B cell (primary cell): ENCODE measurements at regions of chr1 and their contacts with region 1.

Region 1: GRCh38 chr1:229661022-229661877 is 35.2 kb downstream of the URB2 start:
- DNase-seq: peak; percentile 82
- ATAC-seq: peak; percentile 92
- H3K4me3 ChIP-seq: no peak overlapping the region
- H3K4me3 Mint-ChIP-seq: no peak overlapping the region
- H3K27ac ChIP-seq: no peak overlapping the region
- H3K27ac Mint-ChIP-seq: peak overlapping the region; percentile 34
- H3K4me1 ChIP-seq: peaks cover 19 to 22% of the 10 kb centered on the region in 2 donors
- H3K4me1 Mint-ChIP-seq: peaks cover 7% of the 10 kb centered on the region
- H3K27me3 ChIP-seq: no peaks in the 10 kb centered on the region
- H3K27me3 Mint-ChIP-seq: no peaks in the 10 kb centered on the region
- CTCF ChIP-seq: peak; percentile 92

Region 2: GRCh38 chr1:229024528-229025130 is 636.6 kb before region 1 on chr1:
- CTCF ChIA-PET with region 1: no interaction called
- POLR2A ChIA-PET with region 1: no interaction called
- intact Hi-C with region 1: no loop called
- DNase-seq: no peak
- ATAC-seq: no peak
- H3K4me3 ChIP-seq: no peak overlapping the region
- H3K4me3 Mint-ChIP-seq: no peak overlapping the region
- H3K27ac ChIP-seq: no peak overlapping the region
- H3K27ac Mint-ChIP-seq: no peak overlapping the region
- H3K4me1 ChIP-seq: peaks cover 7 to 11% of the 10 kb centered on the region in 2 donors
- H3K4me1 Mint-ChIP-seq: peaks cover 10% of the 10 kb centered on the region
- H3K27me3 ChIP-seq: peaks cover 0 to 5% (median 1%) of the 10 kb centered on the region in 4 experiments
- H3K27me3 Mint-ChIP-seq: peaks cover 12% of the 10 kb centered on the region
- CTCF ChIP-seq: no peak

Region 3: GRCh38 chr1:229674042-229674441 is 12.8 kb after region 1 on chr1:
- CTCF ChIA-PET with region 1: interaction called, 12 read pairs
- POLR2A ChIA-PET with region 1: no interaction called
- intact Hi-C with region 1: no loop called
- DNase-seq: no peak
- ATAC-seq: no peak
- H3K4me3 ChIP-seq: no peak overlapping the region
- H3K4me3 Mint-ChIP-seq: no peak overlapping the region
- H3K27ac ChIP-seq: no peak overlapping the region
- H3K27ac Mint-ChIP-seq: no peak overlapping the region
- H3K4me1 ChIP-seq: no peaks in the 10 kb centered on the region
- H3K4me1 Mint-ChIP-seq: no peaks in the 10 kb centered on the region
- H3K27me3 ChIP-seq: no peaks in the 10 kb centered on the region
- H3K27me3 Mint-ChIP-seq: no peaks in the 10 kb centered on the region
- CTCF ChIP-seq: no peak

Region 4: DNA sequence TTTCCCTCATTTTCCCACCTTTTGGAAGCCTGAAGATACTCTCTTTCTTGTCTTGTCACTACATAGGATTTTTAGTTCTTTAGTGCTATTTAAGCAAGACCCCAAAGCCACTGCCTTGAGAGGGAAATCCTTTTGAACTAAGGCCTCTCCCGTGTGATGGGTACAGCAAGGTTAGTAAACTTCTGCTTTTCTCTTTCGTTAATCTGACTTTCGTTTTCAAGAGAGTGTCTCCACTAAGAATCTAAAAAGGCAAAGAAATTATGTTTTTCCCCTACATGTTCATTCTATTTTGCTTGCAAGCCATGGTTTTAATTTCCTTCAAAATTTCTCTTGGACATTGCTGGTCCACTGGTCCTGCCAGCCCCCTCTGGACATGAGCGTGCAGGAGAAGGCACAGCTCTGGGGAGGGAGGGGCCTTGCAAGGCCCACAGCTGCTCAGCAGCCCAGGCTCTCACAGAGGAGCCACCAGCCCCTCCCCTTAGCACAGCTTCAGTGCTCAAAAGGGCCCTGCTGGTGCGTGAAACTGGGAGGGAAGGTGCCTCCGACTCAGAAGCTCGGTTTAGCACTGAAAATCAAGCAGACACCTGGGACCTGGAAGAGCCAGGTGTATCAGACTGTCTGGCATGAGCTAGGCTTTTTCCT is 194.9 kb after region 1 on chr1:
- CTCF ChIA-PET with region 1: no interaction called
- POLR2A ChIA-PET with region 1: no interaction called
- intact Hi-C with region 1: loop called (anchors 5 kb)
- DNase-seq: peak; percentile 82
- ATAC-seq: peak; percentile 99
- H3K4me3 ChIP-seq: peak overlapping the region; percentile 19 to 67 (median 46)
- H3K4me3 Mint-ChIP-seq: peak overlapping the region; percentile 96
- H3K27ac ChIP-seq: peak overlapping the region; percentile 85 to 90
- H3K27ac Mint-ChIP-seq: peak overlapping the region; percentile 97
- H3K4me1 ChIP-seq: peaks cover 34 to 35% of the 10 kb centered on the region in 2 donors
- H3K4me1 Mint-ChIP-seq: peaks cover 29% of the 10 kb centered on the region
- H3K27me3 ChIP-seq: no peaks in the 10 kb centered on the region
- H3K27me3 Mint-ChIP-seq: no peaks in the 10 kb centered on the region
- CTCF ChIP-seq: no peak

Region 5: DNA sequence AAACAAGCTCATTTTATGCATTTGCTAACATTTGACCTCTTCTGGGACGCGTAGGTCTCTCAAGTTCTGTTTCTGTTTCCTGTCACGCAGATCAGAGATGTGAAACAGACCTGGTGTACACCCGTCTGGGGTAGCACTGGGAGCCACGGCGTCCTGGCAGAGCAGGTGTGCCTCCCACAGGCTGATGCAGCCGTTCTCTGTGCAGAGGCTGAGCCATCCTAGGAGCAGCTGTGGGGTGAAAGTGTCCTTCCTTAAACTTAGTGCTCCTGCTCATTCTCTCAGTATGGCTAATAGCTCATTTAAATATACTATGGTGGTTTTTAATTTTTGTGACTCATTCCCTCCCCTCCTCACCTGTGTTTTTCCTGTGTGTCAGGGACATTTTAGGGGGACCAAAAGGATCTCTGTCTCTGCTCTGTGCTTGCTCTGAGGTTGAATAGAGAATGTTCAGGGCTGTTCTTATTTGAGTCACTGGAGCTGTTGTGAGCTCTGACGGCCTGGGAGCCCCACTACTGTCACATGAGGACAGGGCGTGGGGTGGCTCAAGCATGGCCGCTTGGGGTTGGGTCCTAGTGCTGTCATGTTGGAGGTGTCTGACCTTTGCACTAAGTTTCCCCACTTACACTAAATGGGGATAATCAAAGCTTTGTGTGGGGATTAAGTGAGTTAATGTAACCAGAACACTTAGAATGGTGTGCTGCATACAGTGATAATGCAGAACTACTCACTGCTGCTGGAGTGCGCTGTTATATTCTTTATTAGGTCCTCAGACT is 448.8 kb after region 1 on chr1:
- CTCF ChIA-PET with region 1: interaction called, 13 read pairs
- POLR2A ChIA-PET with region 1: interaction called, 3 read pairs
- intact Hi-C with region 1: loop called (anchors 2 kb)
- DNase-seq: peak; percentile 67
- ATAC-seq: peak; percentile 89
- H3K4me3 ChIP-seq: no peak overlapping the region
- H3K4me3 Mint-ChIP-seq: peak overlapping the region; percentile 74
- H3K27ac ChIP-seq: peak overlapping the region in 1 of 2 donors; percentile 23
- H3K27ac Mint-ChIP-seq: peak overlapping the region; percentile 90
- H3K4me1 ChIP-seq: peaks cover 37 to 53% of the 10 kb centered on the region in 2 donors
- H3K4me1 Mint-ChIP-seq: peaks cover 86% of the 10 kb centered on the region
- H3K27me3 ChIP-seq: no peaks in the 10 kb centered on the region
- H3K27me3 Mint-ChIP-seq: no peaks in the 10 kb centered on the region
- CTCF ChIP-seq: no peak

Region 6: DNA sequence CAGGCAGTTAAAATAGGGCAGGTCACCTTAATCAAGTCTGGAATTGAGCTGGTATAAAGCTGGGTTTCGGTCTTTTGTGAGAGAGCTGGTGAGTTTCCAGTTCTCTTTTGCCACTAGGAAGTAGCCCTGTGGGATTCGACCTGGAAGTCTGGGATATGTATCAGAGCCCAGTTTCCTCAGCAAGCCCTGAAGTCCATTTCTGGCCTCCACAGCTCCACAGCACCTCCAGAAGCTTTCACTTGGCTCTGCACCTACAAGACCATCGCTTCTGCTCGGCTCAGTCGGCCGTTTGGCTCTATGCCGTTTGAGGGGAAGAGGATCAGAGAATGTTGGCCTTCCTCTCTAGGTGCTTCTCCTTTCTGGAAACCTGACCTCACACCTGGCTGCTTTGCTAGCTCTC is 553.8 kb after region 1 on chr1:
- CTCF ChIA-PET with region 1: interaction called, 11 read pairs
- POLR2A ChIA-PET with region 1: interaction called, 3 read pairs
- intact Hi-C with region 1: no loop called
- DNase-seq: peak; percentile 50
- ATAC-seq: no peak
- H3K4me3 ChIP-seq: no peak overlapping the region
- H3K4me3 Mint-ChIP-seq: peak overlapping the region; percentile 44
- H3K27ac ChIP-seq: peak overlapping the region; percentile 21 to 75
- H3K27ac Mint-ChIP-seq: peak overlapping the region; percentile 63
- H3K4me1 ChIP-seq: peaks cover 75 to 77% of the 10 kb centered on the region in 2 donors
- H3K4me1 Mint-ChIP-seq: peaks cover 89% of the 10 kb centered on the region
- H3K27me3 ChIP-seq: no peaks in the 10 kb centered on the region
- H3K27me3 Mint-ChIP-seq: no peaks in the 10 kb centered on the region
- CTCF ChIP-seq: no peak